WTC11 (cell line): ENCODE measurements at regions of chr9 and their contacts with region 1.

Region 1: GRCh38 chr9:14317667-14318320 is 3.9 kb upstream of the NFIB start:
- DNase-seq: no peak
- ATAC-seq: no peak
- H3K4me3 Mint-ChIP-seq: peak overlapping the region; percentile 97
- H3K27ac Mint-ChIP-seq: no peak overlapping the region
- H3K4me1 Mint-ChIP-seq: peaks cover 53% of the 10 kb centered on the region
- H3K27me3 Mint-ChIP-seq: peaks cover 45% of the 10 kb centered on the region
- CTCF ChIP-seq: no peak

Region 2: GRCh38 chr9:14213504-14213903 is 104.3 kb before region 1 on chr9:
- CTCF ChIA-PET with region 1: no interaction called
- POLR2A ChIA-PET with region 1: interaction called, 12 read pairs
- DNase-seq: no peak
- ATAC-seq: no peak
- H3K4me3 Mint-ChIP-seq: no peak overlapping the region
- H3K27ac Mint-ChIP-seq: no peak overlapping the region
- H3K4me1 Mint-ChIP-seq: peaks cover 49% of the 10 kb centered on the region
- H3K27me3 Mint-ChIP-seq: no peaks in the 10 kb centered on the region
- CTCF ChIP-seq: no peak

Region 3: DNA sequence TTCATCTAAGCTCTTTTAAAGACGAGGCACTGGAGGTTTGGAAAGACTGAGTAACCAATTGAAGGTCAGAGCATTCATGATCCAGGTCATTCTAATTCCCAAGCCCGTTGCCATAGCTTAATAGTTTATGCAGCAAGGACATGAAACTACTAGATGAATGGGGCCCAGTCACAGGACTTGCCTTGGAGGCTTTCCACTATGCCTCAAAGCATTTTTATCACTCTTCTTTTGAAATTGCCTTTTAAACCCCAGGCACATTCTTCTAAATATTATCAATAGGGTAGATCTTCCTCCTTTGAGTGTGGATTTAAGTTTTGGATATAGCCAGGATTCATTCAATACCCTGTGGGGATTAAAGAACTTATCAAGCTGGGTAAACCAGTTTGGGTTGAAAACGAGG is 13.4 kb after region 1 on chr9:
- CTCF ChIA-PET with region 1: no interaction called
- POLR2A ChIA-PET with region 1: no interaction called
- DNase-seq: no peak
- ATAC-seq: no peak
- H3K4me3 Mint-ChIP-seq: no peak overlapping the region
- H3K27ac Mint-ChIP-seq: no peak overlapping the region
- H3K4me1 Mint-ChIP-seq: peaks cover 5% of the 10 kb centered on the region; the same call in 1 of the 2 replicates
- H3K27me3 Mint-ChIP-seq: no peaks in the 10 kb centered on the region; the same call in 1 of the 2 replicates
- CTCF ChIP-seq: no peak